H1 (cell line): ENCODE measurements at regions of chr12 and their contacts with region 1.

Region 1: GRCh38 chr12:47307680-47308399 is 228.1 kb upstream of the AMIGO2 start:
- DNase-seq: peak in 1 of 2 experiments; percentile 5
- H3K4me3 ChIP-seq: no peak overlapping the region
- H3K27ac ChIP-seq: no peak overlapping the region
- H3K4me1 ChIP-seq: peaks cover 0 to 4% (median 0%) of the 10 kb centered on the region in 4 experiments; a peak in 1 of 7 replicates
- H3K27me3 ChIP-seq: no peaks in the 10 kb centered on the region
- CTCF ChIP-seq: peak in 2 of 3 experiments; percentile 61 to 72; a peak in 3 of 4 replicates
- EP300 ChIP-seq: no peak
- POLR2A ChIP-seq: no peak
- RAD21 ChIP-seq: peak; percentile 88 to 89

Region 2: DNA sequence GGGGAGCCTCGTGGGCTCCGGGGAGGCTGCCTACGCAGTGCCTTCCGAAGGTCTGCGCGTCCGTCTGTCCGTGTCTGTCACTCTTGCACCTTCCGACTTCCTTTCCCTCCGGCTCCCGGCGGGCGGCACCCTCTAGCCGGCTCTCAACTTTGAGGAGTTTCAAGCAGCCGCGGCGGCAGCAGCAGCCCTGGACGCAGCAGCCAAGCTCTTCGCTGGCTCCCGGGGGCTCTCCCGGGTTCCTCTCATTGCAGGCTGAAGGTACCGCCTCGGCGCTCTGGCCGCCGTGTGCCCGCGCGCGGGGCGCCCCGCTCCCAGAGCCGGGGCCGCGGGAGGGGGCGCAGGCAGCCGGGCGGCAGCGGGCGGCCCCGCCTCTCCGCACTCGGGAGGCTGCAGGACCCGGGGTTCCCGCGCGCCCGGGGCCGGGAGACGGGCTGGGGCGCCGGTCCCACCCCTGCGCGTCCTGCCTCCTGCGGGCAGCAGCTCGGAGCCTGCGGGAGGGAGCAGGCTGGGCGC is 228.3 kb before region 1 on chr12 and contains the starts of genes AMIGO2 and PCED1B:
- CTCF ChIA-PET with region 1: interaction called, 14 read pairs
- POLR2A ChIA-PET with region 1: no interaction called
- DNase-seq: peak in 1 of 2 experiments; percentile 67
- H3K4me3 ChIP-seq: peak within 1 kb of the TSS; percentile 47 to 80 (median 67)
- H3K27ac ChIP-seq: no peak within 1 kb of the TSS
- H3K4me1 ChIP-seq: peaks cover 0 to 7% (median 1%) of the 10 kb centered on the region in 4 experiments; a peak in 2 of 7 replicates
- H3K27me3 ChIP-seq: peaks cover 0 to 23% (median 10%) of the 10 kb centered on the region in 4 experiments; a peak in 6 of 7 replicates
- CTCF ChIP-seq: peak; percentile 21 to 44 (median 41)
- EP300 ChIP-seq: no peak
- POLR2A ChIP-seq: no peak
- RAD21 ChIP-seq: peak; percentile 60 to 74
- total RNA-seq, gene AMIGO2: 3.3 TPM in 2 replicates
- total RNA-seq, gene PCED1B: 4.7 and 4.9 TPM in 2 replicates

Region 3: DNA sequence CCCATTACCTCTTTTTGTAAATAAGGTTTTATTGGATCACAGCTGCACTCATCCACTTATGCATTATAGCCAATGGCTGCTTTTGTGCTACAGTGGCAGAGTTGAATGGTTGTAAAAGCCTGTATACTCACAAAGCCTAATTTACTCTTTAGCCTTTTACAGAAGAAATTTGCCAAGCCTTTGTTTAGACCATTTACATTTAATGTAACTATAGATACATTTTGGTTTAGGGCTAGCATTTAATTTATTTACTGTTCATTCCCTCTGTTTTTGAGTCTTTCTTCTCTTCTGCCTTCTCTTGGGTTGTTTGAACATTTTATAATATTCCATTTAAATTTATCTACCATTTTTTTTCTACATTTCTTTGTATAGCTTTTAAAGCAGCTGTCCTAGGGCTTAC is 11.0 kb before region 1 on chr12:
- CTCF ChIA-PET with region 1: interaction called, 11 read pairs
- POLR2A ChIA-PET with region 1: no interaction called
- DNase-seq: no peak
- H3K4me3 ChIP-seq: no peak overlapping the region
- H3K27ac ChIP-seq: no peak overlapping the region
- H3K4me1 ChIP-seq: peaks cover 0 to 5% (median 0%) of the 10 kb centered on the region in 4 experiments; a peak in 1 of 7 replicates
- H3K27me3 ChIP-seq: no peaks in the 10 kb centered on the region
- CTCF ChIP-seq: no peak
- EP300 ChIP-seq: no peak
- POLR2A ChIP-seq: no peak
- RAD21 ChIP-seq: no peak

Region 4: GRCh38 chr12:47343677-47344567 is 36.1 kb after region 1 on chr12:
- CTCF ChIA-PET with region 1: no interaction called
- POLR2A ChIA-PET with region 1: no interaction called
- DNase-seq: no peak
- H3K4me3 ChIP-seq: no peak overlapping the region
- H3K27ac ChIP-seq: no peak overlapping the region
- H3K4me1 ChIP-seq: no peaks in the 10 kb centered on the region
- H3K27me3 ChIP-seq: peaks cover 0 to 1% (median 0%) of the 10 kb centered on the region in 4 experiments; a peak in 1 of 7 replicates
- CTCF ChIP-seq: no peak
- EP300 ChIP-seq: no peak
- POLR2A ChIP-seq: no peak
- RAD21 ChIP-seq: no peak